K562 (cell line): ENCODE measurements at regions of chr12 and their contacts with region 1.

Region 1: GRCh38 chr12:116703214-116703795 is 34.6 kb downstream of the SPRING1 start:
- DNase-seq: peak; percentile 74 to 78 (median 78)
- ATAC-seq: peak; percentile 92
- H3K4me3 ChIP-seq: no peak overlapping the region
- H3K27ac ChIP-seq: no peak overlapping the region
- H3K4me1 ChIP-seq: no peaks in the 10 kb centered on the region
- H3K27me3 ChIP-seq: peaks cover under 1 to 2% of the 10 kb centered on the region in 2 experiments; a peak in 3 of 5 replicates
- CTCF ChIP-seq: peak; percentile 87 to 92 (median 91)
- EP300 ChIP-seq: no peak
- POLR2A ChIP-seq: no peak
- RAD21 ChIP-seq: peak; percentile 91 to 97

Region 2: GRCh38 chr12:116863275-116863767 is 160.0 kb after region 1 on chr12:
- CTCF ChIA-PET with region 1: interaction called, 3 read pairs
- POLR2A ChIA-PET with region 1: no interaction called
- in situ Hi-C with region 1: no loop called
- intact Hi-C with region 1: loop called (anchors 1 kb)
- DNase-seq: peak; percentile 43 to 65 (median 52)
- ATAC-seq: peak; percentile 86
- H3K4me3 ChIP-seq: no peak overlapping the region
- H3K27ac ChIP-seq: no peak overlapping the region
- H3K4me1 ChIP-seq: no peaks in the 10 kb centered on the region; a peak in 2 of 5 replicates
- H3K27me3 ChIP-seq: peaks cover 19 to 21% of the 10 kb centered on the region in 2 experiments; a peak in 4 of 5 replicates
- CTCF ChIP-seq: peak; percentile 65 to 95 (median 85)
- EP300 ChIP-seq: no peak
- POLR2A ChIP-seq: no peak
- RAD21 ChIP-seq: peak in 1 of 2 experiments; percentile 52; a peak in 2 of 4 replicates

Region 3: GRCh38 chr12:116882742-116883141 is 179.4 kb after region 1 on chr12:
- CTCF ChIA-PET with region 1: interaction called, 10 read pairs
- POLR2A ChIA-PET with region 1: no interaction called
- in situ Hi-C with region 1: no loop called
- intact Hi-C with region 1: loop called (anchors 1 kb)
- DNase-seq: peak in 1 of 4 experiments; percentile 13
- ATAC-seq: peak; percentile 24; the same call in 1 of the 3 replicates
- H3K4me3 ChIP-seq: no peak overlapping the region
- H3K27ac ChIP-seq: no peak overlapping the region
- H3K4me1 ChIP-seq: peaks cover 0 to 29% of the 10 kb centered on the region in 2 experiments; a peak in 3 of 5 replicates
- H3K27me3 ChIP-seq: peaks cover 44 to 64% of the 10 kb centered on the region in 2 experiments
- CTCF ChIP-seq: peak in 2 of 3 experiments; percentile 16 to 45; a peak in 2 of 6 replicates
- EP300 ChIP-seq: no peak
- POLR2A ChIP-seq: no peak
- RAD21 ChIP-seq: peak; percentile 16 to 39; a peak in 2 of 4 replicates

Region 4: DNA sequence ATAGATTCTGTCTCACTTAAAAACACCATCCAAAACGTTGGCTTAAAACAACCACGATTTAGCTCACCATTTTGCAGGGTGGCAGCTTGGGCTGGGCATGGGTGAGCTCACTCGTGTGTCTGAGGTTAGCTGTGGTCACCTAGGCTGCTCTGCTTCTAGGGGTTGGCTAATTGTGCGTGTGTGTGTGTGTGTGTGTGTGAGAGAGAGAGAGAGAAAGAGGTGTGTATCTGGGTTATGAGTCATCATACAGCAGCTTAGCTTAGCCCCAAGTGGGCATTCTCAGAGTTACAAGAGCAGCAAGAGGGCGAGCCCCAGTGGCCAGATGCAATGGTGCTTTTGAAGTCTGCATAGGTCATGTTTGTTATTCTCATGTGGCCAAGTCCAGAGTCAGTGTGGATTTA is 213.4 kb after region 1 on chr12:
- CTCF ChIA-PET with region 1: no interaction called
- POLR2A ChIA-PET with region 1: no interaction called
- in situ Hi-C with region 1: no loop called
- intact Hi-C with region 1: loop called (anchors 2 kb)
- DNase-seq: peak; percentile 65 to 83 (median 71)
- ATAC-seq: peak; percentile 80
- H3K4me3 ChIP-seq: no peak overlapping the region
- H3K27ac ChIP-seq: peak overlapping the region; percentile 34; the same call in 1 of the 3 replicates
- H3K4me1 ChIP-seq: peaks cover 19 to 48% of the 10 kb centered on the region in 2 experiments
- H3K27me3 ChIP-seq: no peaks in the 10 kb centered on the region
- CTCF ChIP-seq: peak; percentile 56 to 76 (median 62)
- EP300 ChIP-seq: peak; percentile 4; the same call in 1 of the 2 replicates
- POLR2A ChIP-seq: no peak
- RAD21 ChIP-seq: peak; percentile 49 to 75

Region 5: GRCh38 chr12:116955382-116956021 is 252.2 kb after region 1 on chr12:
- CTCF ChIA-PET with region 1: interaction called, 17 read pairs
- POLR2A ChIA-PET with region 1: no interaction called
- in situ Hi-C with region 1: loop called (anchors 25 kb)
- intact Hi-C with region 1: loop called (anchors 1 kb)
- DNase-seq: peak in 3 of 4 experiments; percentile 13 to 42 (median 32)
- ATAC-seq: peak; percentile 89
- H3K4me3 ChIP-seq: no peak overlapping the region
- H3K27ac ChIP-seq: no peak overlapping the region
- H3K4me1 ChIP-seq: peaks cover 0 to 11% of the 10 kb centered on the region in 2 experiments; a peak in 3 of 5 replicates
- H3K27me3 ChIP-seq: no peaks in the 10 kb centered on the region
- CTCF ChIP-seq: peak; percentile 41 to 62 (median 52)
- EP300 ChIP-seq: no peak; the same call in 1 of the 2 replicates
- POLR2A ChIP-seq: no peak
- RAD21 ChIP-seq: peak; percentile 53 to 90

Region 6: GRCh38 chr12:117025481-117026151 is 322.3 kb after region 1 on chr12:
- CTCF ChIA-PET with region 1: interaction called, 13 read pairs
- POLR2A ChIA-PET with region 1: no interaction called
- in situ Hi-C with region 1: no loop called
- intact Hi-C with region 1: loop called (anchors 2 kb)
- DNase-seq: peak; percentile 76 to 81 (median 78)
- ATAC-seq: peak; percentile 96
- H3K4me3 ChIP-seq: no peak overlapping the region
- H3K27ac ChIP-seq: no peak overlapping the region; the same call in 2 of the 3 replicates
- H3K4me1 ChIP-seq: peaks cover 4 to 16% of the 10 kb centered on the region in 2 experiments; a peak in 4 of 5 replicates
- H3K27me3 ChIP-seq: no peaks in the 10 kb centered on the region
- CTCF ChIP-seq: peak; percentile 93 to 98 (median 98)
- EP300 ChIP-seq: no peak
- POLR2A ChIP-seq: no peak
- RAD21 ChIP-seq: peak; percentile 94 to 98

Region 7: GRCh38 chr12:117119592-117120198 is 416.4 kb after region 1 on chr12:
- CTCF ChIA-PET with region 1: interaction called, 3 read pairs
- POLR2A ChIA-PET with region 1: no interaction called
- in situ Hi-C with region 1: loop called (anchors 10 kb)
- intact Hi-C with region 1: loop called (anchors 1 kb)
- DNase-seq: peak; percentile 72 to 76 (median 74)
- ATAC-seq: peak; percentile 93
- H3K4me3 ChIP-seq: no peak overlapping the region
- H3K27ac ChIP-seq: no peak overlapping the region
- H3K4me1 ChIP-seq: peaks cover 3 to 4% of the 10 kb centered on the region in 2 experiments; a peak in 4 of 5 replicates
- H3K27me3 ChIP-seq: no peaks in the 10 kb centered on the region; a peak in 1 of 5 replicates
- CTCF ChIP-seq: peak; percentile 81 to 90 (median 85)
- EP300 ChIP-seq: no peak
- POLR2A ChIP-seq: no peak
- RAD21 ChIP-seq: peak; percentile 89 to 93